CD4-positive, alpha-beta T cell (primary cell): ENCODE measurements at regions of chr14 and their contacts with region 1.

Region 1: GRCh38 chr14:88168498-88169165 is 154.4 kb downstream of the KCNK10 start:
- DNase-seq: peak; percentile 30 to 80 (median 45)
- ATAC-seq: peak; percentile 98
- H3K4me3 ChIP-seq: no peak overlapping the region
- H3K4me3 Mint-ChIP-seq: no peak overlapping the region
- H3K27ac ChIP-seq: no peak overlapping the region
- H3K27ac Mint-ChIP-seq: no peak overlapping the region
- H3K4me1 ChIP-seq: peaks cover 6% of the 10 kb centered on the region
- H3K4me1 Mint-ChIP-seq: no peaks in the 10 kb centered on the region
- H3K27me3 ChIP-seq: peaks cover 0 to 10% of the 10 kb centered on the region in 2 experiments
- H3K27me3 Mint-ChIP-seq: peaks cover 23% of the 10 kb centered on the region
- CTCF ChIP-seq: peak; percentile 76

Region 2: GRCh38 chr14:88013750-88014349 is 154.8 kb before region 1 on chr14:
- CTCF ChIA-PET with region 1: interaction called, 11 read pairs
- POLR2A ChIA-PET with region 1: interaction called, 6 read pairs
- intact Hi-C with region 1: loop called (anchors 2 kb)
- DNase-seq: peak in 10 of 14 experiments; percentile 7 to 74 (median 26)
- ATAC-seq: peak; percentile 52
- H3K4me3 ChIP-seq: no peak overlapping the region
- H3K4me3 Mint-ChIP-seq: no peak overlapping the region
- H3K27ac ChIP-seq: no peak overlapping the region
- H3K27ac Mint-ChIP-seq: peak overlapping the region; percentile 70
- H3K4me1 ChIP-seq: peaks cover 15% of the 10 kb centered on the region
- H3K4me1 Mint-ChIP-seq: peaks cover 78% of the 10 kb centered on the region
- H3K27me3 ChIP-seq: no peaks in the 10 kb centered on the region
- H3K27me3 Mint-ChIP-seq: no peaks in the 10 kb centered on the region
- CTCF ChIP-seq: peak; percentile 62

Region 3: DNA sequence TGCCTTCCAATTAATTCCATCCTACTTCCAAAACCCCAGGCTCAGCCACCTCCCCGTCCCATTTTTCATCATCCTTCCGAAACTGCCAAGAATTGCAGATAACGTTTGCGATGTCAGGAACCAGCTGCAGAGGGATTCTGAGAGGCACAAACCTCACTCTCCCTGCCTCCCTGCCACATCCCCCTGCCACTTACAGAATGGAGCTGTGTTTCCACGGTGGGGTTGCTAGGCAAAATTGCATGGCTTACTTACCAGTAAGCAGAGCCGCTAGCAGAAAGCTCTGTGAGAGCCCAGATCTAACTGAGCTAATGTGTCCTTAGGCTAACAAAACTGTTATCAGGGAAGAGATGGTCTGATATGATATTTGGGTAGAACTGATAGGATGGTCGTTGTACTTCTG is 27.0 kb after region 1 on chr14:
- CTCF ChIA-PET with region 1: no interaction called
- POLR2A ChIA-PET with region 1: no interaction called
- intact Hi-C with region 1: no loop called
- DNase-seq: no peak
- ATAC-seq: no peak
- H3K4me3 ChIP-seq: no peak overlapping the region
- H3K4me3 Mint-ChIP-seq: no peak overlapping the region
- H3K27ac ChIP-seq: no peak overlapping the region
- H3K27ac Mint-ChIP-seq: no peak overlapping the region
- H3K4me1 ChIP-seq: no peaks in the 10 kb centered on the region
- H3K4me1 Mint-ChIP-seq: no peaks in the 10 kb centered on the region
- H3K27me3 ChIP-seq: peaks cover 6 to 18% of the 10 kb centered on the region in 2 experiments
- H3K27me3 Mint-ChIP-seq: peaks cover 60% of the 10 kb centered on the region
- CTCF ChIP-seq: no peak